ENCODE measurements at regions of chr12 and their contacts with region 1.

Region 1: DNA sequence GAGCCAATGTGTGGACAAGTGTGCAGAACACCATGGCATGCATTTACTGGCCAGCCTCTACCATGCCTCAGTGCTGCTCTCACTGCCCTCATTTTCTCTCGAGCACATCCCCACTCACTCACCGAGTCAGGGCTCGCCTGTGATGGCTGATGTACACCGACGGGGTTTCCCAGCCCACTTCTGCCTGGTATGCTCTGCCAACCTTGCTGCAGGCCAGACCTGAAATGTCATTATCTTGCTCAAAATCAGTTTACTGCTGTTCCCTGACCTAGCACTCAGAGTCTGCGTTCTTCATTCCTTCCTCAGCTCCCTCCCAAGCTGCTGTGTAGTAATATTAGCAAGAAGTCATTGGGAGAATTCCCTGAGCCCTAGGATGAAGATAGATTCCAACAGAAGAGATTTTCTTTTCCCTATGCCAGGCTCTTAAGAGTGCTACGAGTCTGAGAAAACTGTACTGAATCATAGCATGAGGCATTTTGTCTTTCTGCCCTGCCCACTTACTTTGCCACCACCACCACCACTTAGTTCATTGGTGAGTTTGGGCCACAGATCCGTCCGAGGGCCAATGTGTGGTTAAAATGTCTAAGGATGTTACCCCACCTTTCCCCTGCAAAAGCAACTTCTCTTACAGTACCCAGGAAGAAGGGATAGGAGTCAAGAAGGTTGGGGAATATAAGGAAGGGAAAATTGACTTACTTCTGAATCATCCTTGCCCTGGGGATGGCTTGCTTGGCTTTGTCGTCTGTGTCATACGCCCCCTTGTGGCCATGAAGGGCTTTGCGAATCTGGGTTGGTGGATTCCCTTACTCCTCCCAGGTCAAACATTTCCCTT is 51.0 kb downstream of the BMAL2 start:
- DNase-seq: peak; percentile 77
- CTCF ChIP-seq: peak; percentile 82

Region 2: DNA sequence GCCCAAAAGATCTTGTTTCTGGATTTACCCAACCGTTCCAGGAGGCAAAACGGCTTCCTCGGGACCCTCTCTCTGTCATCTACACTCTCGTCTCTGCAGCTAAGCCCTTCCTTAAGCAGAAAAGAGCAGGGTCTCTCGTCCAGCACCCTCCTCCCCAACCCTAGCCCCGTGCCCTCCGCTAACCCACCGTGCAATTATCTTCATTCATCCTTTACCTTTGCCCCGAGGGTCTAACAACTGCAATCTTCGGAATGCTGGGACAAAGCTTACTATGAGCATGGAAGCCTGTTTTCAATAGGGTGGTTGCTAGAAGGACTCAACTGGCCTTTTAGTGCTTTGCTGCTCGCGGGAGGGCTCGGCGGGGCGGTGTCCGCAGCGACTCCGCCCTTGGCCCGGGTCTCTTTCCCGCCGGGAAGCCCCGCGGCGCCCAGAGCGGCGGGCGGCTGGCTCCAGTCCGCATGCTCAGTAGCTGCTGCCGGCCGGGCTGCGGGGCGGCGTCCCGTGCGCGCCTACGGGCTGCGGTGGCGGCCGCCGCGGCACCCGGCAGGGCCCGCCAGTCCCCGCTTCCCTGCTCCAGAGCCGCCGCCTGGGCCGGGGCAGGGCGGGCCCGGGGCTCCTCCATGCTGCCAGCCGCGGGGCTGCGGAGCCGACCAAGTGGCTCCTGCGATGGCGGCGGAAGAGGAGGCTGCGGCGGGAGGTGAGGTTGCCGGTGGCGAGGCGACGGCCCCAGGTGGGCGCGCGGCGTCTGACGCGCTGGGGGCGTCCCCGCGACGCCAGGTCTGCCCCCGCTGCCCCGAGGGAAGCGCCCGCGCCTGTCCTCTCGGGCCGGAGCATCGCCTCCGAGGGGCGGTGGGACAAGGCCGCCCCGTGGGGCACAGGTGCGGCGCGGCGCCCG is 51.0 kb before region 1 on chr12 and contains the start of gene BMAL2:
- CTCF ChIA-PET with region 1: interaction called, 14 read pairs
- POLR2A ChIA-PET with region 1: no interaction called
- DNase-seq: peak; percentile 74
- CTCF ChIP-seq: no peak

Region 3: DNA sequence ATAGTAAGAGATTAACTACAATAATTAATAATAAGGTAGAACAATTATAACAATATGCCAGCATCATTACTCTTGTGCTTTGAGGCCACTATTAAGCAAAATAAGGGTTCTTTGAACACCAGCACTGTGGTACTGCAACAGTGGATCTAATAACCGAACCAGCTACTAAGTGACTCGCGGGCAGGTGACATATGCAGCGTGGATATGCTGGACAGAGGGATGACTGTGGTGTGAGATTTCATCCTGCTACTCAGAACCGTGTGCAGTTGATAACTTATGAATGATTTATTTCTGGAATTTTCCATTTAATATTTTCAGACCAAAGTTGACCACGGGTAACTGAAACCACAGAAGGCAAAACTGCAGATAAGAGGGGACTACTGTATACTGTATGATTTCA is 16.6 kb before region 1 on chr12:
- CTCF ChIA-PET with region 1: interaction called, 50 read pairs
- POLR2A ChIA-PET with region 1: interaction called, 3 read pairs
- DNase-seq: no peak
- CTCF ChIP-seq: no peak

Region 4: GRCh38 chr12:27394676-27395075 is 11.0 kb after region 1 on chr12:
- CTCF ChIA-PET with region 1: interaction called, 23 read pairs
- POLR2A ChIA-PET with region 1: no interaction called
- DNase-seq: no peak
- CTCF ChIP-seq: no peak

Region 5: GRCh38 chr12:27400856-27401354 is 17.3 kb after region 1 on chr12:
- CTCF ChIA-PET with region 1: interaction called, 20 read pairs
- POLR2A ChIA-PET with region 1: no interaction called
- DNase-seq: no peak
- CTCF ChIP-seq: no peak